ENCODE measurements at regions of chr16 and their contacts with region 1.

Region 1: GRCh38 chr16:67943619-67944504 is at the start of gene LCAT:
- DNase-seq: peak; percentile 43
- H3K4me3 ChIP-seq: no peak within 1 kb of the TSS
- H3K27ac ChIP-seq: peak within 1 kb of the TSS; percentile 59 to 89 (median 71)
- H3K4me1 ChIP-seq: peaks cover 20 to 22% (median 20%) of the 10 kb centered on the region in 4 donors
- H3K27me3 ChIP-seq: no peaks in the 10 kb centered on the region
- CTCF ChIP-seq: no peak
- EP300 ChIP-seq: no peak
- POLR2A ChIP-seq: no peak
- total RNA-seq, gene LCAT: 2.2 to 30.7 (median 4.2) TPM

Region 2: GRCh38 chr16:67892899-67893742 is 50.7 kb before region 1 on chr16 and contains the start of gene PSKH1:
- in situ Hi-C with region 1: no loop called
- intact Hi-C with region 1: loop called (anchors 1 kb)
- DNase-seq: peak; percentile 98
- H3K4me3 ChIP-seq: peak within 1 kb of the TSS; percentile 68 to 98 (median 89)
- H3K27ac ChIP-seq: peak within 1 kb of the TSS; percentile 94 to 99 (median 98)
- H3K4me1 ChIP-seq: peaks cover 8 to 50% (median 39%) of the 10 kb centered on the region in 4 donors
- H3K27me3 ChIP-seq: no peaks in the 10 kb centered on the region
- CTCF ChIP-seq: no peak
- EP300 ChIP-seq: no peak
- POLR2A ChIP-seq: no peak
- total RNA-seq, gene PSKH1: 24.1 to 132 (median 56.2) TPM

Region 3: GRCh38 chr16:69223882-69224281 is 1280.0 kb after region 1 on chr16:
- in situ Hi-C with region 1: no loop called
- intact Hi-C with region 1: no loop called
- DNase-seq: no peak
- H3K4me3 ChIP-seq: no peak overlapping the region
- H3K27ac ChIP-seq: no peak overlapping the region
- H3K4me1 ChIP-seq: peaks cover 0 to 6% (median 0%) of the 10 kb centered on the region in 4 donors
- H3K27me3 ChIP-seq: no peaks in the 10 kb centered on the region
- CTCF ChIP-seq: no peak
- EP300 ChIP-seq: no peak
- POLR2A ChIP-seq: no peak